CD8-positive, alpha-beta memory T cell (primary cell): ENCODE measurements at regions of chr11 and their contacts with region 1.

Region 1: GRCh38 chr11:47213985-47214564 is 699 bp upstream of the DDB2 start:
- DNase-seq: peak; percentile 74 to 87 (median 81)
- H3K4me3 ChIP-seq: peak overlapping the region; percentile 100
- H3K4me3 Mint-ChIP-seq: peak overlapping the region; percentile 87 to 100 (median 97)
- H3K27ac ChIP-seq: peak overlapping the region; percentile 90
- H3K27ac Mint-ChIP-seq: peak overlapping the region; percentile 88 to 100 (median 99)
- H3K4me1 ChIP-seq: peaks cover 34% of the 10 kb centered on the region
- H3K4me1 Mint-ChIP-seq: peaks cover 29 to 35% (median 30%) of the 10 kb centered on the region in 3 donors
- H3K27me3 ChIP-seq: no peaks in the 10 kb centered on the region
- H3K27me3 Mint-ChIP-seq: no peaks in the 10 kb centered on the region

Region 2: DNA sequence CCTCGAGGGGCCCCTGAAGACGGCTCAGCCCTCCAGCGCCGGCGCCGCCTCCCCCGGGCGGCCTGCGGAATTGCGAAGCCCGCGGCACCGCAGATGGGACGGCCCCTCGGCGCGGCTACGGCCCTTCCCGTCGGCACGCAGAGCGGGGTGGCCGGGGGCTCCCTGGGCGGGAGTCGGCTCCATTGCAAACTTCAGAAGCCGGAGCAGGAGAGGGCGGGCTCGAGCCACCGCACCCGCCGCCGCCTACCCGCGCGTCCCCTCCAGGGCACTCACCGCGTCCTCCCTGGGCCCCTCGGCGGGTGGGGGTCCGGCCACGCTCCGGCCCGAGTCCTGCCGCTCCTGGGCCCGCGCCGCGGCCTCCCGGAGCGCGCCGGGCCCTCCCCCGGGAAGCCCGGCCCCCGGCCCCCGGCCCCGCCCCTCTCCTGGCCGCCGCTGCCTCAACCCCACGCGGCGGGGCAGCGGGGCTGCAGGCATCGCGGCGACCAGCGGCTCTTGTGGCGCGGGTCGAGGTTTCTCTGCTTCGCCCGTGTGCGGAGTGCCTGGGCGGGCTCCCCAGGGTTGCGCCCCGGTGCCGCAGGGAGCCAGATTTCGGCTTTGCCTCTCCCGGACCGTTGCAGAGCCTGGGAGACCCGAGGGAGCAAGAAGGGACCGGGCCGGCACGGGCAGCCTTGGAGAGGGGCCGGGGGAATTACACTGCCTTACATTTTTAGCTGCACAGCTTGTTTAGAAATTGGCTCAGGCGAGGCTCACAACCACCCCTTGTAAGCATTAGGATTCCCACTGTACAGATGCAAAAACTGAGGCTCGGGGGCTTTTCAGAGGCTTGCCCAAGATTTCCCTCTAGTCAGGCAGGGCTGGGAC is 27.8 kb before region 1 on chr11 and contains the start of gene PACSIN3:
- CTCF ChIA-PET with region 1: interaction called, 8 read pairs
- POLR2A ChIA-PET with region 1: interaction called, 11 read pairs
- DNase-seq: peak in 4 of 5 donors; percentile 22 to 45 (median 24)
- H3K4me3 ChIP-seq: peak within 1 kb of the TSS; percentile 55
- H3K4me3 Mint-ChIP-seq: peak within 1 kb of the TSS; percentile 78 to 91 (median 83)
- H3K27ac ChIP-seq: no peak within 1 kb of the TSS
- H3K27ac Mint-ChIP-seq: peak within 1 kb of the TSS in 3 of 8 donors; percentile 58 to 78 (median 77)
- H3K4me1 ChIP-seq: peaks cover 12% of the 10 kb centered on the region
- H3K4me1 Mint-ChIP-seq: peaks cover 5 to 11% (median 5%) of the 10 kb centered on the region in 3 donors
- H3K27me3 ChIP-seq: peaks cover 22% of the 10 kb centered on the region
- H3K27me3 Mint-ChIP-seq: peaks cover 18 to 31% of the 10 kb centered on the region in 2 donors
- total RNA-seq, gene PACSIN3: 7.9 to 9.2 TPM

Region 3: GRCh38 chr11:47201015-47201414 is 13.1 kb before region 1 on chr11:
- CTCF ChIA-PET with region 1: no interaction called
- POLR2A ChIA-PET with region 1: no interaction called
- DNase-seq: no peak
- H3K4me3 ChIP-seq: no peak overlapping the region
- H3K4me3 Mint-ChIP-seq: no peak overlapping the region
- H3K27ac ChIP-seq: no peak overlapping the region
- H3K27ac Mint-ChIP-seq: no peak overlapping the region
- H3K4me1 ChIP-seq: no peaks in the 10 kb centered on the region
- H3K4me1 Mint-ChIP-seq: no peaks in the 10 kb centered on the region
- H3K27me3 ChIP-seq: no peaks in the 10 kb centered on the region
- H3K27me3 Mint-ChIP-seq: peaks cover 0 to 4% of the 10 kb centered on the region in 2 donors

Region 4: GRCh38 chr11:47233989-47234668 is 20.1 kb after region 1 on chr11:
- CTCF ChIA-PET with region 1: interaction called, 9 read pairs
- POLR2A ChIA-PET with region 1: interaction called, 15 read pairs
- DNase-seq: peak in 1 of 5 donors; percentile 37
- H3K4me3 ChIP-seq: peak overlapping the region; percentile 28
- H3K4me3 Mint-ChIP-seq: peak overlapping the region; percentile 24 to 83 (median 53)
- H3K27ac ChIP-seq: no peak overlapping the region
- H3K27ac Mint-ChIP-seq: peak overlapping the region; percentile 75 to 95 (median 91)
- H3K4me1 ChIP-seq: peaks cover 17% of the 10 kb centered on the region
- H3K4me1 Mint-ChIP-seq: peaks cover 14 to 25% (median 24%) of the 10 kb centered on the region in 3 donors
- H3K27me3 ChIP-seq: no peaks in the 10 kb centered on the region
- H3K27me3 Mint-ChIP-seq: no peaks in the 10 kb centered on the region

Region 5: GRCh38 chr11:47248664-47249377 is 34.7 kb after region 1 on chr11 and contains the start of gene ACP2:
- CTCF ChIA-PET with region 1: interaction called, 20 read pairs
- POLR2A ChIA-PET with region 1: interaction called, 31 read pairs
- DNase-seq: peak; percentile 75 to 90 (median 84)
- H3K4me3 ChIP-seq: peak within 1 kb of the TSS; percentile 86
- H3K4me3 Mint-ChIP-seq: peak within 1 kb of the TSS; percentile 95 to 99 (median 96)
- H3K27ac ChIP-seq: peak within 1 kb of the TSS; percentile 85
- H3K27ac Mint-ChIP-seq: peak within 1 kb of the TSS; percentile 73 to 100 (median 98)
- H3K4me1 ChIP-seq: peaks cover 23% of the 10 kb centered on the region
- H3K4me1 Mint-ChIP-seq: peaks cover 23 to 34% (median 28%) of the 10 kb centered on the region in 3 donors
- H3K27me3 ChIP-seq: no peaks in the 10 kb centered on the region
- H3K27me3 Mint-ChIP-seq: no peaks in the 10 kb centered on the region
- total RNA-seq, gene ACP2: 24.1 to 24.5 TPM

Region 6: GRCh38 chr11:47271961-47272661 is 58.0 kb after region 1 on chr11:
- CTCF ChIA-PET with region 1: interaction called, 4 read pairs
- POLR2A ChIA-PET with region 1: interaction called, 10 read pairs
- DNase-seq: no peak
- H3K4me3 ChIP-seq: peak overlapping the region; percentile 60
- H3K4me3 Mint-ChIP-seq: peak overlapping the region; percentile 78 to 95 (median 88)
- H3K27ac ChIP-seq: peak overlapping the region; percentile 58
- H3K27ac Mint-ChIP-seq: peak overlapping the region; percentile 60 to 89 (median 78)
- H3K4me1 ChIP-seq: peaks cover 34% of the 10 kb centered on the region
- H3K4me1 Mint-ChIP-seq: peaks cover 49 to 59% (median 53%) of the 10 kb centered on the region in 3 donors
- H3K27me3 ChIP-seq: no peaks in the 10 kb centered on the region
- H3K27me3 Mint-ChIP-seq: no peaks in the 10 kb centered on the region

Region 7: GRCh38 chr11:47899801-47900200 is 685.7 kb after region 1 on chr11:
- CTCF ChIA-PET with region 1: no interaction called
- POLR2A ChIA-PET with region 1: interaction called, 10 read pairs
- DNase-seq: peak in 1 of 5 donors; percentile 11
- H3K4me3 ChIP-seq: no peak overlapping the region
- H3K4me3 Mint-ChIP-seq: peak overlapping the region in 1 of 7 donors; percentile 0
- H3K27ac ChIP-seq: no peak overlapping the region
- H3K27ac Mint-ChIP-seq: peak overlapping the region in 2 of 8 donors; percentile 74 to 75
- H3K4me1 ChIP-seq: peaks cover 10% of the 10 kb centered on the region
- H3K4me1 Mint-ChIP-seq: peaks cover 9 to 16% (median 11%) of the 10 kb centered on the region in 3 donors
- H3K27me3 ChIP-seq: no peaks in the 10 kb centered on the region
- H3K27me3 Mint-ChIP-seq: peaks cover 0 to 3% of the 10 kb centered on the region in 2 donors